Heart right ventricle (tissue), 16 donors: ENCODE measurements at regions of chr16 and their contacts with region 1.

Region 1: DNA sequence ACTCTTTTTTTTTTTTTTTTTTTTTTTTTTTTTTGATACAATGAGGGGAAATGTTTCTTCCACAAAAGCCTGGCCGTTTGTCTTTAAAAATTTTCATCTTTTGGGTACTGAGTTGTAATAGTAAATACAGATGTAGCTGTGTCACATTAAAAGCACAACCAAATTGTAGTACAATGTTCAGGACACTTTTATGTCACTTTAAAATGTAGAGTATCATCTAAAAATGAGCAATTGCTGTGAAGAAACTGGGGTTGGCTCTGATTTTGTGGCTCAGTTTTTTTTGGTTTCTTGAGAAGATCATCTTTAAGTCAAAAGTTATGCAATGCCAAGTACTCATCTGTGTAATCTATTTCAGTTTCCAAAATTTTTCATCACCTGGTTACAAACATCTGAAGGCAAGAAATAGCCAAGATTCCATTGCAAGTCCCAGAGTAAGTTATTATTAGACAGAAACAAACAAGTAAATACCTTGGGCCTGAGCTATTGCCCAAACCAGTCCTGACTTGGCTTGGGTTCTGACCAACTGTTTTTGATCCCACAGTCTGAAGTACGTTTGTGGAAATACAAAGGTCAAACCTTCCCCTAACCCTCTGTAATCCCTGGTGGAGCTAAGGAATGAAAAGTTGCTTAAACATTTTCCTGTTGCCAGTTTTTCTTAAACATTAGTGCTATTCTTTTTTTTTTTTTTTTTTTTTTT is 717.2 kb downstream of the WWOX start:
- DNase-seq: peak in 1 of 2 donors; percentile 28
- ATAC-seq: peak in 7 of 8 donors; percentile 54 to 75 (median 67)
- H3K4me3 ChIP-seq: no peak overlapping the region
- H3K27ac ChIP-seq: peak overlapping the region in 8 of 10 donors; percentile 16 to 84 (median 59)
- H3K4me1 ChIP-seq: peaks cover 6 to 36% (median 31%) of the 10 kb centered on the region in 9 donors
- H3K27me3 ChIP-seq: no peaks in the 10 kb centered on the region
- CTCF ChIP-seq: no peak

Region 2: DNA sequence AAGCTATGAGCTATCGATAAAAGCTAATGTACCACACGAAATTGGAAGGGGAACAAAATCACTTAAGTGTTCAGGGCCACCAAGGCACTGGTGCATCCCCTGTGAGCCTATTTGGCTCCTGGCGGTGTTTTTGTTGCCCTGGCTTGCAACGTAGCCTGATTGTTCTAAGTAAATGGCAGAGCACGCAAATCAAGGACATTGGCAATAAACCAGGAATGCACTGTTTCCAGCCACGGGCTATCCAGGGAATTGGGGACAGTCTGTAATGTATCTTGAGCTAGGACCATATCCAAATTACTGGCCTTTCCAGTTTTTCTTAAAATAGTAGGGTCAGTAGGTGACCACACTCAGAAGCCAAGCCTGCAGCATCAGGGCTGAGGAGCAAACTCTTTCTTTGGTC is 49.9 kb after region 1 on chr16:
- intact Hi-C with region 1: loop called in 1 of 10 experiments (anchors 5 kb)
- DNase-seq: peak; percentile 14
- ATAC-seq: peak in 7 of 8 donors; percentile 56 to 95 (median 81)
- H3K4me3 ChIP-seq: no peak overlapping the region
- H3K27ac ChIP-seq: peak overlapping the region in 1 of 10 donors; percentile 23
- H3K4me1 ChIP-seq: peaks cover 0 to 16% (median 8%) of the 10 kb centered on the region in 9 donors
- H3K27me3 ChIP-seq: no peaks in the 10 kb centered on the region
- CTCF ChIP-seq: no peak